ENCODE measurements at regions of chr2 and their contacts with region 1.

Region 1: GRCh38 chr2:228426502-228427216 is 245.2 kb upstream of the SPHKAP start:
- DNase-seq: no peak

Region 2: DNA sequence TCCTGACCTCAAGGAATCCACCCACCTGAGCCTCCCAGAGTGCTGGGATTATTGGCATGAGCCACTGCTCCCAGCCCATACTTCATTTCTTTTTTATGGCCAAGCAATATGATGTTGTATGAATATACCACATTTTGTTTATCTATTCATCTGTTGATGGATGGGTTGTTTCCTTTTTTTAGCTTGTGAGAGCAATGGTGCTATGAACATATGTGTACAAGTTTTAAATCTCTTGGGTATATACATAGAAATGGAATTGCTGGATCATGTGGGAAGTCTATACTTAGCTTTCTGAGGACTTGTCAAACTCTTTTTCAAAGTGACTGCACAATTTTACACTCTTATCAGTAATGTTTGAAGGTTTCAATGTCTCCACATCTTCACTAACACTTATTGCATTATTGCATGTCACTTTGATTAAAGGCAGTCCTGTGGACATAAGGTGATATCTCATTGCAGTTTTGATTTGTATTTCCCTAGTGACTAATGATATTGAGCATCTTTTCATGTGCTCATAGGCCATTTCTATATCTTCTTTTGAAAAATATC is 78.1 kb before region 1 on chr2:
- intact Hi-C with region 1: loop called (anchors 10 kb)
- DNase-seq: no peak

Region 3: GRCh38 chr2:228377533-228377932 is 49.1 kb before region 1 on chr2:
- intact Hi-C with region 1: loop called (anchors 1 kb)
- DNase-seq: no peak

Region 4: GRCh38 chr2:228474466-228474865 is 47.8 kb after region 1 on chr2:
- intact Hi-C with region 1: no loop called
- DNase-seq: no peak

Region 5: DNA sequence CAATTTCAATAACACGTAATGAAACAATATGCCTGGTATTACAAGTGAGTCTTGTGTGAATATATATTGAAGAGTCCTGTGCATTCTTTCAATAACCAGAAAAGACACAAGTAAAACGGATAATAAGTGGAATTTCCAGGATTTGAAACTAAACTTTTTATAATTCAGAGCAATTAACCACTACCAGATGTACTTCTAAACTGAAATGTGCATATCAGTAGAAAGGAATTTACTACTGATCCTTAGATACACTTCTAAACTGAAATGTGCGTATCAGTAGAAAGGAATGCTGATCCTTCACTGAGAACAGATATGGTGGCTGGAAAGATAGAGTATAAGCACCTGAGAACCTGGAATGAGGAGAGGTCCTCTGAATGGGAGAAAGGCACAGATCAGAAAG is 225.7 kb after region 1 on chr2:
- intact Hi-C with region 1: loop called (anchors 5 kb)
- DNase-seq: no peak

Region 6: GRCh38 chr2:229501051-229501794 is 1074.6 kb after region 1 on chr2:
- intact Hi-C with region 1: no loop called
- DNase-seq: no peak

Measured in cardiac septum (tissue), 1 donor.